GM13976 (cell line): ENCODE measurements at regions of chr3 and their contacts with region 1.

Region 1: GRCh38 chr3:59857589-59858346 is 807.9 kb upstream of the CFAP20DC start:
- DNase-seq: peak; percentile 68
- CTCF ChIP-seq: peak; percentile 87

Region 2: DNA sequence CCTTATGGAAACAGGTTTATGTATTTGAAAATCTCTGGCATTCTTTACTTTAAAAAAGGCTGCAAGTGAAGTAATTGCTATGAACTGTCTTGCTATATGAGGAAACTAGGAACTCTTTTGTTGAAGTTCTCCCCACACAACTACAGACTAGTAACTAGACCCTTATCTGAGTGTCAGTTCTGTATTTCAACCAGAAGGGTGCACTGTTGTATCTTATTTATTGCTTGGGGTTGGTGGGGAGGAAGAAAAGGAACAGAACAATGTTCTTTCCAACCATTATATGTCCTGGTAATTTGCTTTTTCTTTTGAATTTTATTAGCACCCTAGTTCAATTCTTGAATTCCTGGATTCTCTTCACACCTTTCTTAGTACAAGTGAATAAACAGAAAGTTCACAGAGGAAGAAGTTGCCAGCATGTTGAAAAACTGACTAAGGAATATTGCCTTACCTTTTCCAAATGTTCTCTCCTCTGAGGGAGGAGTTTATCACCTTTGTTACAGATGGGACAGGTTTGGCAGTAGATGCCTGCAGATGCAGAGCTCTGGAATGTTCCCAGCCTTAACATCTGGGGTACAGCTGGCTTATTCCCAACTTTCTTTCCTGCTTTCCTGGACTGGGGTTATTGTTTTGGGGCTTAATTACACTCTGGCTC is 645.5 kb before region 1 on chr3:
- in situ Hi-C with region 1: loop called (anchors 10 kb)
- DNase-seq: peak; percentile 53
- CTCF ChIP-seq: peak; percentile 43

Region 3: GRCh38 chr3:59313365-59313764 is 544.4 kb before region 1 on chr3:
- in situ Hi-C with region 1: loop called (anchors 25 kb)
- DNase-seq: peak; percentile 34
- CTCF ChIP-seq: peak; percentile 54